Right ventricle myocardium inferior (tissue), 1 donor: ENCODE measurements at regions of chr16 and their contacts with region 1.

Region 1: DNA sequence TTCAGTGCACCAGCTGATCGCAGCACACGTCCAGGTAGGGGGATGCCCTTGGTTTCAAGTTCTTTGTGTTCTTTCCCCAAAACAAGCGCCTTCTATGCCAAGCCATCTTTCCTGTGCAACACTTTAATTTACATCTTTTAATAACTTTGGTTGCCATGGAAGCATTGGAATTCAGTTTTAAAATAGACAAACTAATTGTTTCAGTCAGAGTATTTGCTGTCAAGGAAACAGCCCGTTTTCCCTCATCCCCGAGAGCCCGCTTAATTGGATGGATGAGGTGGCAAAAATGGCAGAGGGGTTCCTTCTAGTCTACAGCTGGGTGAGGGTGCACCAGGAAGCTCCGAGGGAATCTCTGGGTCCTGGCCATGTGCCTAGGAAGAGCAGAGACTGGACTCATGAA is 793.7 kb upstream of the EEF2KMT start:
- DNase-seq: no peak
- ATAC-seq: no peak

Region 2: DNA sequence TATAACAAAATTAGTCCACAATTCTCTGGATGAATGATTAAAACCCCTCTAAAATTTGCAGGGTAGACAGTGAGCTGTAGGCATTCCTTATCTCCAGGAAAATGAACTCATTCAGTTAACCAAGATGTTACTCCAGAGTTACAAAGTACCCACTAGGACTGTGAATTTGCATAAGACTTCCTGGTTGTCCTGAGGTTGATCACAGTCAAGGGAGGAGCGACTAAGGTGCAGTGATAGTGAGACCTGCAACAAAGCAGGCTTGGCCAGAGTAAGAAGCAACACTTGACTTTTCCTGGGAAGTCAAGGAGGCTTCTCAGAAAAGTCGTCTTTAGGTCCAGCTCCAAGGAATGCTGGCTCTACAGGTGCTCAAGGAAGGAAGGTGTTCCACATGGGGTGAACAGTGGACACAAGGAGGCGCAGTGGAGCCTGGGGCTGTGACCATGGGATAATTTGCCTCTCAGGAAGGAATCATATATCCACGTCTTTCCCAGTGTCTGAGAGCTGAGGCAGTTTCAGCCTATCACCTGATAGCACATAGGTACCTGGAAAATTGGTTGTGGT is 27.4 kb after region 1 on chr16:
- intact Hi-C with region 1: loop called (anchors 2 kb)
- DNase-seq: no peak
- ATAC-seq: no peak

Region 3: DNA sequence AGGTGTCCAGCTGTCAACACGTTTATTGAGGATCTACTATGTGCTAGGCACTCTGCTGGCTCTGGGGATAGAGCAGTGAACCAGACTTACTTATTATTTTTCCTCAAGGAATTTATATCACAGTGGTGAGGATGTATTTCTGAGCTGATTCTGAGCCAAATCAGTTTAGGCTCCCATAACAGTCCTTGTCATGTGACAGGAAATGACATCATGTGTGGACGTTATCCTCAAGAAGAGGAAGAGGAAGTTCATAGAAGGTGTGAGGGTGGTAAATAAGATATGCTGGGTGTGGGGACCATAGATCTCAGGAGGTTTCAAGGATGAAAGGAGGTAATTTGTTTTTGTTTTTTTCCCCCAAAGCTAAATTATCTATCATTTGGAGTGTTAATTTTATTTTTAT is 79.8 kb after region 1 on chr16:
- intact Hi-C with region 1: no loop called
- DNase-seq: no peak
- ATAC-seq: no peak